ENCODE measurements at regions of chr2 and their contacts with region 1.

Region 1: GRCh38 chr2:199940373-199940772 is 14.9 kb downstream of the TYW5 start:
- DNase-seq: peak; percentile 26
- ATAC-seq: no peak
- H3K4me3 ChIP-seq: no peak overlapping the region
- H3K4me3 Mint-ChIP-seq: no peak overlapping the region
- H3K27ac ChIP-seq: no peak overlapping the region
- H3K27ac Mint-ChIP-seq: no peak overlapping the region
- H3K4me1 ChIP-seq: no peaks in the 10 kb centered on the region
- H3K4me1 Mint-ChIP-seq: peaks cover 3% of the 10 kb centered on the region
- H3K27me3 ChIP-seq: no peaks in the 10 kb centered on the region
- H3K27me3 Mint-ChIP-seq: no peaks in the 10 kb centered on the region
- CTCF ChIP-seq: peak; percentile 35

Region 2: GRCh38 chr2:199704358-199705238 is 235.8 kb before region 1 on chr2:
- CTCF ChIA-PET with region 1: interaction called, 3 read pairs
- POLR2A ChIA-PET with region 1: no interaction called
- intact Hi-C with region 1: loop called (anchors 2 kb)
- DNase-seq: peak; percentile 37
- ATAC-seq: no peak
- H3K4me3 ChIP-seq: no peak overlapping the region
- H3K4me3 Mint-ChIP-seq: no peak overlapping the region
- H3K27ac ChIP-seq: no peak overlapping the region
- H3K27ac Mint-ChIP-seq: no peak overlapping the region
- H3K4me1 ChIP-seq: no peaks in the 10 kb centered on the region
- H3K4me1 Mint-ChIP-seq: no peaks in the 10 kb centered on the region
- H3K27me3 ChIP-seq: no peaks in the 10 kb centered on the region
- H3K27me3 Mint-ChIP-seq: peaks cover 4% of the 10 kb centered on the region
- CTCF ChIP-seq: peak; percentile 49

Region 3: GRCh38 chr2:199910338-199911051 is 29.9 kb before region 1 on chr2:
- CTCF ChIA-PET with region 1: no interaction called
- POLR2A ChIA-PET with region 1: no interaction called
- intact Hi-C with region 1: no loop called
- DNase-seq: no peak
- ATAC-seq: no peak
- H3K4me3 ChIP-seq: peak overlapping the region; percentile 60 to 98 (median 87)
- H3K4me3 Mint-ChIP-seq: peak overlapping the region; percentile 89
- H3K27ac ChIP-seq: peak overlapping the region; percentile 97 to 98
- H3K27ac Mint-ChIP-seq: peak overlapping the region; percentile 87
- H3K4me1 ChIP-seq: peaks cover 12 to 26% of the 10 kb centered on the region in 2 donors
- H3K4me1 Mint-ChIP-seq: peaks cover 43% of the 10 kb centered on the region
- H3K27me3 ChIP-seq: no peaks in the 10 kb centered on the region
- H3K27me3 Mint-ChIP-seq: no peaks in the 10 kb centered on the region
- CTCF ChIP-seq: no peak

Region 4: DNA sequence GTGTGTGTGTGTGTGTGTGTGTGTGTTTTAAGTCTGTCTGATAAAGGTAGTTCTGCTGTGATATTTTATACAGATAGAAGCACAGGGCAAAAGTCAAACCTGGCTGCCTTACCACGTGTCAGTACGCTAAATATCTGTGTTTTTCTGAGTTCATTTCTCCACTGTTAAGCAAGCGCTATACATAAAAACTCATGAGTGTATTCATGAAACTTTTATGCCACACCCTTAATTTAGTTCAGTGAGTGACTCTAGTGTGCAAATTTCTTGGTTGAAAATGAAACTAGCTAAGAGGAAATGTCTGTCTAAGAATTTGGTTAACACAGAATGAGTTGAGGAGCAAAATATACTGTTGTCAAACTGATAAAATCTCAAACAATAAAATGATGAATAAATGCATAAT is 1253.7 kb after region 1 on chr2:
- CTCF ChIA-PET with region 1: no interaction called
- POLR2A ChIA-PET with region 1: no interaction called
- intact Hi-C with region 1: no loop called
- DNase-seq: peak; percentile 76
- ATAC-seq: peak; percentile 96
- H3K4me3 ChIP-seq: peak overlapping the region in 1 of 5 experiments; percentile 29
- H3K4me3 Mint-ChIP-seq: peak overlapping the region; percentile 80
- H3K27ac ChIP-seq: peak overlapping the region; percentile 31 to 50
- H3K27ac Mint-ChIP-seq: peak overlapping the region; percentile 89
- H3K4me1 ChIP-seq: peaks cover 46 to 55% of the 10 kb centered on the region in 2 donors
- H3K4me1 Mint-ChIP-seq: peaks cover 59% of the 10 kb centered on the region
- H3K27me3 ChIP-seq: no peaks in the 10 kb centered on the region
- H3K27me3 Mint-ChIP-seq: no peaks in the 10 kb centered on the region
- CTCF ChIP-seq: no peak